A549 (cell line): ENCODE measurements at regions of chr20 and their contacts with region 1.

Region 1: GRCh38 chr20:2402271-2402980 is 21.7 kb downstream of the TGM6 start:
- DNase-seq: peak; percentile 54 to 58
- ATAC-seq: peak; percentile 63 to 79; a peak in 5 of 6 replicates
- H3K4me3 ChIP-seq: no peak overlapping the region
- H3K27ac ChIP-seq: no peak overlapping the region
- H3K4me1 ChIP-seq: no peaks in the 10 kb centered on the region
- CTCF ChIP-seq: peak; percentile 54
- EP300 ChIP-seq: no peak
- POLR2A ChIP-seq: no peak
- RAD21 ChIP-seq: peak; percentile 33 to 53; a peak in 3 of 5 replicates

Region 2: DNA sequence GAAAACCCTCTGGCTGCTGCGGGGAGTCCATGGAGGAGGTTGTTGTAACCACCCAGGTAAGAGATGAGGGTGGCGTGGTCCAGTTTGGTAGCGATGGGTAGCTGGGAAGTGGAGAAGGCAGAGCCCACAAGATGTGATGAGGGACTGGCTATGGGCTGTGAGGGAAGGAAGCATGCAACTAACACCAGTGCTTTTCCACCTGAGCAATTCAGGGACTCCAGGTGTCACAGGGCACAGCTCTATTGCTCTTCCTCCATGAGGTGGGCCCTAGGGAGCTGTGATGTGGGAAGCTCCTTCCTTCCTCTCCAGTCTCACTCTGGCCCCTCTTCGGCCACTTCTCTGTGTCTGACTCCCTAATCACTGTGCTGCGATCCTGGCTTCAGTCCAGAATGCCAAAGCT is 54.1 kb before region 1 on chr20:
- CTCF ChIA-PET with region 1: no interaction called
- POLR2A ChIA-PET with region 1: no interaction called
- DNase-seq: no peak
- ATAC-seq: no peak
- H3K4me3 ChIP-seq: no peak overlapping the region
- H3K27ac ChIP-seq: no peak overlapping the region
- H3K4me1 ChIP-seq: no peaks in the 10 kb centered on the region
- CTCF ChIP-seq: no peak
- EP300 ChIP-seq: no peak
- POLR2A ChIP-seq: no peak
- RAD21 ChIP-seq: no peak

Region 3: GRCh38 chr20:2387180-2387577 is 15.2 kb before region 1 on chr20:
- CTCF ChIA-PET with region 1: interaction called, 51 read pairs
- POLR2A ChIA-PET with region 1: no interaction called
- DNase-seq: peak; percentile 46 to 51
- ATAC-seq: peak in 1 of 2 experiments; percentile 79; a peak in 3 of 6 replicates
- H3K4me3 ChIP-seq: no peak overlapping the region
- H3K27ac ChIP-seq: no peak overlapping the region
- H3K4me1 ChIP-seq: no peaks in the 10 kb centered on the region
- CTCF ChIP-seq: peak; percentile 20; the same call in 2 of the 3 replicates
- EP300 ChIP-seq: no peak
- POLR2A ChIP-seq: no peak
- RAD21 ChIP-seq: peak in 1 of 2 experiments; percentile 32; a peak in 2 of 5 replicates

Region 4: DNA sequence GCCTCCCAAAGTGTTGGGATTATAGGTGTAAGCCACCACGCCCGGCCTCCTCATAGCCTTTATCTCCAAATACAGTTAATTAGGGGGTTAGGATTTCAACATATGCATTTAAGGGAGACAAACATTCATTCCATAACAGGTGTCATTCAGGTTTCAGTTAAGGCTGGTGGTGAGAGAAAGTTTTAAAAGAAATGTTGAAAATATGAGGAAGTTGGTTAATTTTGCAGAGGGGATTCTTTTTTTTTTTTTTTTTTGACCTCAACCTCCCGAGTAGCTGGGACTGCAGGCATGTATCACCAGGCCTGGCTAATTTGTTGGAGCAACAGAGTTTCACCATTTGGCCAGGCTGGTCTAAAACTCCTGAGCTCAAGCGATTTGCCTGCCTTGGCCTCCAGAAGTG is 277.6 kb after region 1 on chr20:
- CTCF ChIA-PET with region 1: no interaction called
- POLR2A ChIA-PET with region 1: no interaction called
- DNase-seq: no peak
- ATAC-seq: no peak
- H3K4me3 ChIP-seq: no peak overlapping the region
- H3K27ac ChIP-seq: no peak overlapping the region
- H3K4me1 ChIP-seq: no peaks in the 10 kb centered on the region
- CTCF ChIP-seq: no peak
- EP300 ChIP-seq: no peak
- POLR2A ChIP-seq: no peak
- RAD21 ChIP-seq: no peak